MCF 10A (cell line): ENCODE measurements at regions of chr12 and their contacts with region 1.

Region 1: GRCh38 chr12:67648521-67649260 is at the start of gene DYRK2:
- DNase-seq: peak; percentile 65
- H3K4me3 Mint-ChIP-seq: peak within 1 kb of the TSS; percentile 91
- H3K27ac Mint-ChIP-seq: peak within 1 kb of the TSS; percentile 63
- H3K4me1 Mint-ChIP-seq: peaks cover 40% of the 10 kb centered on the region
- H3K27me3 Mint-ChIP-seq: no peaks in the 10 kb centered on the region
- CTCF ChIP-seq: peak; percentile 7
- total RNA-seq, gene DYRK2: 24.6 and 33.3 TPM in 2 replicates

Region 2: DNA sequence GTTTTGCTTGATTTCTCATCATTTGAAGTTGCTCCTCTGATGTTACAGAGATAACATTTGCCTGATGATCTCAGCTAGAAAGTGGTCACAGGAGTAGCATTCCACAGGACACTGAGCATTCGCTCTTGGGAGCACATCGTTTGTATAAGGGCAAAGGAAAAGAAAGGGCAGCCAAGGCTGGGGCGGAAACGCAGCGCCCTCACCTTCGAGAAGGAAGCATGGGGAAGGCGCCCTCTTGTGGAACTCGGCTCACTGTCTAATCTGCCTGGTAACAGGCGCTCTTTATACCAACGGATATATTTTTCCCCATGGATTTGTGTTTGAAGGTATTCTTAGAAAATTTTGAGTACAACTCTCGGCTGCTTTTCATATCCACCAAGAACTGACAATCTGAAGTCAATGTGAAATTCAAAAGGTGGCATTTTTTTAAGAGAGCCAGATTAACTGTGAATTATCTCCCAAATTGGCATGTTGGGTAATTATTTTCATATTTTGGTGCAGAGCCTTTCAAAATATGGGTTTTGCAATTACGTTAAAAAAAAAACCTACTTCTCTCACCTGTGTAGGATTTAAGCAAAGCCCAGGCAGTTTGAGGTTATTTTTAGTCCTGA is 206.8 kb before region 1 on chr12:
- CTCF ChIA-PET with region 1: no interaction called
- POLR2A ChIA-PET with region 1: no interaction called
- intact Hi-C with region 1: loop called (anchors 1 kb)
- DNase-seq: peak; percentile 82
- H3K4me3 Mint-ChIP-seq: no peak overlapping the region
- H3K27ac Mint-ChIP-seq: no peak overlapping the region
- H3K4me1 Mint-ChIP-seq: no peaks in the 10 kb centered on the region
- H3K27me3 Mint-ChIP-seq: no peaks in the 10 kb centered on the region
- CTCF ChIP-seq: peak; percentile 78

Region 3: GRCh38 chr12:67515679-67516340 is 132.9 kb before region 1 on chr12:
- CTCF ChIA-PET with region 1: no interaction called
- POLR2A ChIA-PET with region 1: interaction called, 5 read pairs
- intact Hi-C with region 1: loop called (anchors 2 kb)
- DNase-seq: no peak
- H3K4me3 Mint-ChIP-seq: no peak overlapping the region
- H3K27ac Mint-ChIP-seq: peak overlapping the region; percentile 13
- H3K4me1 Mint-ChIP-seq: peaks cover 16% of the 10 kb centered on the region
- H3K27me3 Mint-ChIP-seq: no peaks in the 10 kb centered on the region
- CTCF ChIP-seq: no peak

Region 4: DNA sequence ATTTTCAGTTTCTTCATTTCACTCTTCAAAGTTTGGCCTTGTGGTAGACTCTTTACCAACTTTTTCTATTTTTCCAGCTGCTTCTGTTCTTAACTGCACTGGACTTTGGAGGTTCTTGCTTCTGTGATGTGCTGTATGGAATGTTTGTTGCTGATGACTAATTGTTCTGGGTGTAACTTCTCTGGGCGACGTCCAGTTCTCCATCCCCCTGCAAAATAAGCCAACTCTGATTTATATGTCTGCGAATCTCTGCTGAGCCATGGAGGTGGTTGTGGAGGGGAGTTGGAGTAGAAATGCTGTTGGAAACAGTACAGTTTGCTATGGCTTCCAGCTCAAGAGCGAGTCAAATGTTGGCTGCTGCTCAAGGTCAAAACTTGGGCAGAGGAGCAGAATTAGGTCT is 114.0 kb before region 1 on chr12:
- CTCF ChIA-PET with region 1: no interaction called
- POLR2A ChIA-PET with region 1: no interaction called
- intact Hi-C with region 1: loop called (anchors 5 kb)
- DNase-seq: peak; percentile 79
- H3K4me3 Mint-ChIP-seq: no peak overlapping the region
- H3K27ac Mint-ChIP-seq: peak overlapping the region; percentile 40
- H3K4me1 Mint-ChIP-seq: peaks cover 28% of the 10 kb centered on the region
- H3K27me3 Mint-ChIP-seq: no peaks in the 10 kb centered on the region
- CTCF ChIP-seq: no peak

Region 5: GRCh38 chr12:67710582-67710981 is 61.9 kb after region 1 on chr12:
- CTCF ChIA-PET with region 1: no interaction called
- POLR2A ChIA-PET with region 1: no interaction called
- intact Hi-C with region 1: no loop called
- DNase-seq: peak; percentile 23
- H3K4me3 Mint-ChIP-seq: no peak overlapping the region
- H3K27ac Mint-ChIP-seq: no peak overlapping the region
- H3K4me1 Mint-ChIP-seq: peaks cover 22% of the 10 kb centered on the region
- H3K27me3 Mint-ChIP-seq: no peaks in the 10 kb centered on the region
- CTCF ChIP-seq: no peak

Region 6: DNA sequence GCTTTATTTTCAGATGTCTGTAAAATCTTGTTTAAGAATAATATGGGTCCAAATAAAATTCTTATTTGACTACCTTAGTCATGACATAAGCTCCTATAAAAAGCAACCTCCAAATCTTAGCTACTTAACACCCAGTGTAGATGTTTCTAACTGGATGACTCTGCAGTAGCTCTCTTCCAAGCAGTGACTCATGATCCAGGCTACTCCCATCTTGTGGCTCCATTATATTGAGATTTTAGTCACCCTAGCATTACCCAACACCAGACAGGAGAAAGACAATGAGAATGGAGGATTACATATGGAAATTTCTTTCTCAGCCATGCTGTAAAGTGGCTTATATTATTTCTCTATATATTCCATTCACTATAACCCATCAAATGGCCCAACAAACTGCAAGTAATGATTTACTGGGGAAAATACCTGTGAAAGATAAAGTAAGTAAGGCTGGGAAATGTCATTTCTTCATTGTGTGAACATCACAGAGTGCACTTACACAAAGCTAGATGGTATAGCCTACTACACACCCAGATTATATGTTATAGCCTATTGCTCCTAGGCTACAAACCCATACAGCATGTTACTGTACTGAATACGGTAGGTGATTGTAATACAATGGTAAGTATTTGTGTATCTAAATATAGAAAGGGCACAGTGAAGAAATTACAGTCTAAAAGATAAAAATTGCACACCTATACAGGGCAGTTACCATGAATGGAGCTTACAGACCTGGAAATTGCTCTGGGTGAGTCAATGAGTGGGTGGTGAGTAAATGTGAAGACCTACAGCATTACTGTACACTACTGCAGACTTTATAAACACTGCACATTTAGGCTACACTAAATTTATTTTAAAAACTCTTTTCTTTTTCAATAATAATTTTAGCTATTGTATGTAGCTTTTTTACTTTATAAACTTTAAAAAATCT is 163.0 kb after region 1 on chr12:
- CTCF ChIA-PET with region 1: no interaction called
- POLR2A ChIA-PET with region 1: no interaction called
- intact Hi-C with region 1: loop called (anchors 2 kb)
- DNase-seq: peak; percentile 71
- H3K4me3 Mint-ChIP-seq: no peak overlapping the region
- H3K27ac Mint-ChIP-seq: no peak overlapping the region
- H3K4me1 Mint-ChIP-seq: no peaks in the 10 kb centered on the region
- H3K27me3 Mint-ChIP-seq: no peaks in the 10 kb centered on the region
- CTCF ChIP-seq: no peak

Region 7: DNA sequence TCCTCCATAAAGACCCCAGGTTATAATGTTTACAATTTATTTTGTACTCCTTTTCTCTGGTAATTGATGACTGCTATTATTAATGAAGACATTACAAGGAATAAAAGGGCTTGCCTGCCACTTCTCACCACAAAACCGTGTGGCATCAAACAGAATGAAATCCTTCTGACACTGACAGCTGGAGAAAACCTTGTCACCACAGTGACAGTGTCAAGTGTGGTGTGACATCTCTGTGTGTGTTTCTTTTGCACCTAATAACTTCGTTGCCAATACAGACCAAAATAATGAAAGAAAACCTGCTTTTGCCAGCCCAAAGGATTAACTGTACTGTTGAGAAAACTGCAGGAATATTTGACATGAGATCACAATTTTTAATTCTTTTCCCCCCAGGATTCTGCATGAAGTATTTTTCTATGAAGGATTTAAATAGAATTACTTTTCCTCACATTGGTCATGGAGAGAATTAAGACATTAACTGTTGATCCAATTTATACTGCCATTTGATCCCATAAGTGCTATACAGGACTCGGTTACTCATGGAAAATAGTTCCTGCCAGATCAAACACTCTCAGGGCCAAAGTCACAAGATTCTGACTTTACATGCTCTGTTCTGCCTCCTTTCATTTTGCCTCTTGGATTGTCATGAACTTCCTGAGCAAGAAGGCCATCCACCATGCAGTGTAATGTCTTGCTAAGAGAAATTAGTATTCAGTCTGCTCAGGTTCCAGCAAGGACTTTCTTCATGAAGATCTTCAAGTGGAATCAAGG is 280.1 kb after region 1 on chr12:
- CTCF ChIA-PET with region 1: interaction called, 4 read pairs
- POLR2A ChIA-PET with region 1: no interaction called
- intact Hi-C with region 1: loop called (anchors 5 kb)
- DNase-seq: no peak
- H3K4me3 Mint-ChIP-seq: no peak overlapping the region
- H3K27ac Mint-ChIP-seq: no peak overlapping the region
- H3K4me1 Mint-ChIP-seq: peaks cover 10% of the 10 kb centered on the region
- H3K27me3 Mint-ChIP-seq: peaks cover 4% of the 10 kb centered on the region
- CTCF ChIP-seq: no peak

Region 8: DNA sequence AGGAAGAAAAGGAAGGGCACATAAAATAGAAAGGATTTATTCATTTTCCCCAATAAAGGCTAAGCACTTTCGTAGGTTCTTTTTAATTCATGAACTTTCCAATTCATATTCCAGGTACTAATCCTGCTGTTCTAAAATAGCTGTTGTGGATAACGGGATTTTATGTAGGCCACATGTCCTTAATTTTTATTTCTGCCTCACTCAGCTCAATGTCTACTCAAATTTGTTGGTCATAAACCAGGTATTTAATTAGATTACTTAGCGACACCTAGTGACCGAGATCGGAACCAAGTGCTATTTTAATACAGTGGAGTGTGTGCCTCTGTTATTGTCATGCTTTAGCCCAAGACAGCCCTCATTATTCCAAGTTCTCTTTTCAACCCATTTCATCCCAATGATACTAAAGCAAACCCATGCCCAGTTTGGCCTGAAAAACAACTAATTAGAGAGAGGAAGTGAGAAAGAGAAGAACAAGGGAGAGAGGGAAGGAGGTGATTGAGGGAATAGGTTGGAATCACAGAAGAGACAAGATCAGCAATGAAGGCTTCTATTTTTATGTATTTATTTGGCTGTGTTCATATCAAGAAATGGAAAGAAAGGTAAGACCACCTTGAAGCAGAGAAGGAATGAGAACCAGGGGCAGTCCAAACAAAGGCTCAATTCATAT is 294.7 kb after region 1 on chr12:
- CTCF ChIA-PET with region 1: interaction called, 10 read pairs
- POLR2A ChIA-PET with region 1: interaction called, 9 read pairs
- intact Hi-C with region 1: loop called (anchors 1 kb)
- DNase-seq: peak; percentile 78
- H3K4me3 Mint-ChIP-seq: no peak overlapping the region
- H3K27ac Mint-ChIP-seq: no peak overlapping the region
- H3K4me1 Mint-ChIP-seq: peaks cover 9% of the 10 kb centered on the region
- H3K27me3 Mint-ChIP-seq: no peaks in the 10 kb centered on the region
- CTCF ChIP-seq: peak; percentile 73